ENCODE measurements at regions of chr2 and their contacts with region 1.

Region 1: GRCh38 chr2:18209919-18210639 is 331.6 kb downstream of the KCNS3 start:
- DNase-seq: no peak
- ATAC-seq: no peak
- H3K4me3 ChIP-seq: no peak overlapping the region
- H3K27ac ChIP-seq: no peak overlapping the region
- H3K4me1 ChIP-seq: no peaks in the 10 kb centered on the region
- H3K27me3 ChIP-seq: no peaks in the 10 kb centered on the region
- CTCF ChIP-seq: no peak
- EP300 ChIP-seq: no peak
- POLR2A ChIP-seq: no peak
- RAD21 ChIP-seq: no peak

Region 2: DNA sequence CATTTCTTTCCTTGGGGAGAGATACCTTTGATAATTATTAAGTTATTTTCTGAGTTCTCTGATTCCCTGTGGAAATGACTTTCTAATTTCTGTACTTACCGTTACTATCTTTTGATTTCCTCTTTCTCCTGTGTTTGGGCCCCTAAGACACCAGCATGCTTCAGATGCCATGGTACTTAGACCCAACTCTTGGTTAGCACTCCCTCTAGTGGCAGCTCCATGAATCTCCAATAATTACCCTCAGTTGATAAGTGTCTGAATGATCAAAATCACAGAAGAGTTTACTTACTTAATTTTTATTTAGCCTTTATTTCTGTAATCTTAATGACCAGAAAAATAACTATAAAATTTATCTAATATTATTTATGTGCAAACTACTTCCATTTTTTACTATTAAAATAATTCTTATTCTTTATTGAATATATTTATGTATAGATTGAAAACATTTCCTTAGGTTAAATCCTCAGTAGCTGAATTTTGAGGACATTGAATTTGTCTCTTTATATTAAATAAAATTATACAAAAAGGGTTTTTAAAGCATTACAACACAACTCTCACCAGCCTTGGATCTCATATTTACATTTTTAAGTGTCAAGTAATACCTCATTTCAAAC is 31.2 kb before region 1 on chr2:
- CTCF ChIA-PET with region 1: interaction called, 12 read pairs
- POLR2A ChIA-PET with region 1: no interaction called
- RAD21 ChIA-PET with region 1: no interaction called
- SMC1A ChIA-PET with region 1: no interaction called
- in situ Hi-C with region 1: no loop called
- intact Hi-C with region 1: no loop called
- DNase-seq: peak; percentile 13
- ATAC-seq: peak; percentile 97
- H3K4me3 ChIP-seq: no peak overlapping the region
- H3K27ac ChIP-seq: no peak overlapping the region
- H3K4me1 ChIP-seq: no peaks in the 10 kb centered on the region
- H3K27me3 ChIP-seq: no peaks in the 10 kb centered on the region
- CTCF ChIP-seq: peak; percentile 71 to 85 (median 83)
- EP300 ChIP-seq: no peak
- POLR2A ChIP-seq: no peak
- RAD21 ChIP-seq: peak; percentile 70

Region 3: DNA sequence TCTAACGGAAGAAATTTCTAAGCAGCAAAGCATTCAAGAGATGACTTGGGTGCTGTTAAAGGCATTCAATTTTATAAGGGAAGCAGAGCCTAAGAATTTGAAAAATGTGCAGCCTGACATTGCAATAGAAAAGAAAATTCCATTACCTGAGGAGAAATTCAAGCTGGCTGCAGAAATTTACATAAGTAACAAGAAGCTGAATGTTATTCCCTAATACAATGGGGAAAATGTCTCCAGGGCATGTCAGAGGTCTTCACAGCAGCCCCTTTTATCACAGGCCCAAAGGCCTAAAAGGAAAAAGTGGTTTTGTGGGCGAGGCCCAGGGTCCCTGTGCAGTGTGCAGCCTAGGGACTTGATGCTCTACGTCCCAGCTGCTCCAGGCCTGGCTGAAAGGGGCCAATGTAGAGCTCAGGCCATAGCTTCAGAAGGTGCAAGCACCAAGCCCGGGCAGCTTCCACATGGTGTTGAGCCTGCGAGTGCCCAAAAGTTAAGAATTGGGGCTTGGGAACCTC is 43.7 kb after region 1 on chr2:
- CTCF ChIA-PET with region 1: no interaction called
- POLR2A ChIA-PET with region 1: no interaction called
- RAD21 ChIA-PET with region 1: no interaction called
- SMC1A ChIA-PET with region 1: no interaction called
- in situ Hi-C with region 1: no loop called
- intact Hi-C with region 1: no loop called
- DNase-seq: no peak
- ATAC-seq: no peak
- H3K4me3 ChIP-seq: no peak overlapping the region
- H3K27ac ChIP-seq: no peak overlapping the region
- H3K4me1 ChIP-seq: no peaks in the 10 kb centered on the region
- H3K27me3 ChIP-seq: no peaks in the 10 kb centered on the region
- CTCF ChIP-seq: no peak
- EP300 ChIP-seq: no peak
- POLR2A ChIP-seq: no peak
- RAD21 ChIP-seq: no peak